Activated T-helper 1 cell treated with anti-CD3 and anti-CD28 coated beads, Interleukin-12 subunit alpha, Interleukin-12 subunit beta, Interleukin-2, Interleukin-4 antibody, amounts not matched to agents 30 ng/mL and 10 ng/mL and 1 ng/mL, durations not matched to agents 14 hours and 24 hours and 36 hours (primary cell): ENCODE measurements at regions of chr14 and their contacts with region 1.

Region 1: GRCh38 chr14:89430391-89431236 is 13.6 kb upstream of the FOXN3 start:
- DNase-seq: peak; percentile 42
- H3K4me3 Mint-ChIP-seq: peak overlapping the region; percentile 79
- H3K27ac Mint-ChIP-seq: peak overlapping the region; percentile 85
- H3K4me1 Mint-ChIP-seq: peaks cover 56% of the 10 kb centered on the region
- H3K27me3 Mint-ChIP-seq: no peaks in the 10 kb centered on the region

Region 2: GRCh38 chr14:88706425-88706824 is 724.2 kb before region 1 on chr14:
- intact Hi-C with region 1: no loop called
- DNase-seq: no peak
- H3K4me3 Mint-ChIP-seq: no peak overlapping the region
- H3K27ac Mint-ChIP-seq: no peak overlapping the region
- H3K4me1 Mint-ChIP-seq: no peaks in the 10 kb centered on the region
- H3K27me3 Mint-ChIP-seq: no peaks in the 10 kb centered on the region

Region 3: GRCh38 chr14:89365061-89365801 is 65.4 kb before region 1 on chr14:
- intact Hi-C with region 1: loop called (anchors 1 kb)
- DNase-seq: peak; percentile 40
- H3K4me3 Mint-ChIP-seq: peak overlapping the region; percentile 73
- H3K27ac Mint-ChIP-seq: peak overlapping the region; percentile 89
- H3K4me1 Mint-ChIP-seq: peaks cover 38% of the 10 kb centered on the region
- H3K27me3 Mint-ChIP-seq: no peaks in the 10 kb centered on the region

Region 4: DNA sequence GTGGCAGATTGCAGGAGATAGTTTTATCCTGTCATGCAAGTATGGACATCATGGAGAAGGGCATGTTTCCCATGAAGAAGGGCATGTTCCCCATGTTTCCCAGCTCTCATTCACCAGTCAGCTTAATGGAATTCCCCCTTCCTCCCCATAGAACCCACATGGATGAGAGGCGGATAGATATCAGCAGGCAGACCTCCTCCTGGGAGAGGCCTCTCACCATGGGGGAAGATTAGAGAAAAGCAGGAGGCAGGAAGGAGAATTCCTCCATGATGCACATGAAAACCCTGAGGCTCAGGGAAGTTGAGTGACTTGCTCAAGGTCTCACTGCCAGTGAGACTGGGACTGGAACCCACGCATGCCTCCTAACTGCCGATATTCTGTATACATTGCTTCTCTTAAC is 79.3 kb after region 1 on chr14:
- intact Hi-C with region 1: loop called (anchors 1 kb)
- DNase-seq: no peak
- H3K4me3 Mint-ChIP-seq: peak overlapping the region; percentile 76
- H3K27ac Mint-ChIP-seq: peak overlapping the region; percentile 93
- H3K4me1 Mint-ChIP-seq: peaks cover 63% of the 10 kb centered on the region
- H3K27me3 Mint-ChIP-seq: no peaks in the 10 kb centered on the region

Region 5: GRCh38 chr14:89681086-89682018 is 250.7 kb after region 1 on chr14:
- intact Hi-C with region 1: loop called (anchors 1 kb)
- DNase-seq: peak; percentile 22
- H3K4me3 Mint-ChIP-seq: peak overlapping the region; percentile 66
- H3K27ac Mint-ChIP-seq: peak overlapping the region; percentile 89
- H3K4me1 Mint-ChIP-seq: peaks cover 45% of the 10 kb centered on the region
- H3K27me3 Mint-ChIP-seq: no peaks in the 10 kb centered on the region

Region 6: GRCh38 chr14:89720741-89721315 is 290.2 kb after region 1 on chr14:
- intact Hi-C with region 1: loop called (anchors 2 kb)
- DNase-seq: peak; percentile 59
- H3K4me3 Mint-ChIP-seq: peak overlapping the region; percentile 49
- H3K27ac Mint-ChIP-seq: peak overlapping the region; percentile 86
- H3K4me1 Mint-ChIP-seq: peaks cover 64% of the 10 kb centered on the region
- H3K27me3 Mint-ChIP-seq: no peaks in the 10 kb centered on the region